Activated CD4-positive, alpha-beta T cell treated with anti-CD3 and anti-CD28 coated beads for 36 hours (primary cell): ENCODE measurements at regions of chr17 and their contacts with region 1.

Region 1: DNA sequence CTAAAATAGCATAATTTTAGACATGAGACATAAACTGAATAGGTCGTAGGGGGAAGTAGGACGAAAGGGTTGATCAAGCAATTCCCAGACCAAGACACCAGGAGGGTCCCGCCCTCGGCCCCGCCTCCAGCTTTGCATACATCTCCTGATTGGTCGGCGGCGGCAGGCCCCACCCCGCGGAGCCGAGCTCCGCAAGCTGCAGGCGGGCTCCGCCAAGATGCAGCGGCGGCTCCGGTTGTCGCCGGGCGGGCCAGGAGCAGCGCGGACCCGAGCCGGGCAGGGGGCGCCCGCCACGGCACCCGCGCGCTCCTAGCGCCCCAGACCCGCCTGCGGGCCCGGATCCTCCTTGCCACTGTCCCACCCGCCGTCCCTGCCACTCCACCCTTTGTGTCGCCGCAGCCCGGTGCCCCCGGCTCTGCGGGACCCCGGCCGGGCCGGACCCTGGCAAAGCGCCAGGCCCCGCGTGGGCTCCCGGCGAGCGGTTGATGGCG is at the start of gene CDR2L:
- DNase-seq: peak; percentile 95
- ATAC-seq: peak; percentile 98
- H3K4me3 Mint-ChIP-seq: peak within 1 kb of the TSS; percentile 73
- H3K27ac Mint-ChIP-seq: no peak within 1 kb of the TSS
- H3K4me1 Mint-ChIP-seq: peaks cover 9% of the 10 kb centered on the region
- H3K27me3 Mint-ChIP-seq: peaks cover 10% of the 10 kb centered on the region
- total RNA-seq, gene CDR2L: 0.89 to 0.91 TPM

Region 2: DNA sequence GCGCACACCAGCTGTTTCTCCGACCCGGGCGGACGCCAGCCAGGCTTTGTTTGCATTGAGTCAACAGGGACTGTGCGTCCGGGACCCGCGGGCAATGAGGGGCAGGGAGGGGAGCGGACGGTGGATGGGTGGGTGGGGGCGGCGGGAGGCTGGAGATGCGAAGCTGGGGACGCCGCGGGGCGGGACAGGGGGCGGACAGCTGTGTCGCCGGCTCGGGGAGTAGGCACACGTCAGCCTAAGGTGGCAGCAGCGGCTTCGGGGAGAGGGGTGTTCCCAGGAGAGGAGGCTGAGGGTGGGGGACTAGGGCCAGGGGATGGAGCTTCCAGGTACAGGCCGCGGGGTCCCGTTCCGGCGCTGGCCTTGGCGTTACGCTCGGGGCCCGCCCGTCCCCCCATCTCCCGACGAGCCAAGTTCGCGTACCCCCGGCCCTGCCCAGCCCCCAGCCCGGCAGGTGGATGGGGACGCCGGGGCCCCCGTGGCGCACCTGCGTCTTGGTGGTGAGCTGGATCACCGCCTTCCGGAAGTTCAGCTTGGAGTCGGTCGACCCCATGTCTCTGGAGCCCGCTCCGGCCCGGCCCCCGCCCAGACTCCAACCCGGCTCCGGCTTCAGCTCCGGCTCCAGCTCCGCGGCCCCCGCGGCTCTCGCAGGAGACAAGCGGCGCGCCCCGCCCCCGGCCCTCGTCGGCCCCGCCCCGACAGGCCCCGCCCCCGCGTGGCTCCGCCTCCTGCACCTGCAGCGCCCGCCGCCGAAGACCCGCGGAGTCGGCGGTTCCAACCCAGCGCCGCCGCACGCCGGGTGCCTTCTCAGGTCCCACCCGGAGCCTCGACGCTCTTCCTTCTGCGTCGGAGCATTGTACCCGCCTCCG is 15.1 kb before region 1 on chr17 and contains the start of gene HID1:
- CTCF ChIA-PET with region 1: interaction called, 19 read pairs
- POLR2A ChIA-PET with region 1: no interaction called
- intact Hi-C with region 1: loop called in 1 of 2 experiments (anchors 1 kb)
- DNase-seq: peak; percentile 88
- ATAC-seq: peak; percentile 89
- H3K4me3 Mint-ChIP-seq: peak within 1 kb of the TSS; percentile 70
- H3K27ac Mint-ChIP-seq: no peak within 1 kb of the TSS
- H3K4me1 Mint-ChIP-seq: peaks cover 9% of the 10 kb centered on the region
- H3K27me3 Mint-ChIP-seq: peaks cover 7% of the 10 kb centered on the region
- total RNA-seq, gene HID1: 1.6 TPM

Region 3: GRCh38 chr17:75046582-75047289 is 59.3 kb after region 1 on chr17 and contains the starts of genes ATP5PD and KCTD2:
- CTCF ChIA-PET with region 1: no interaction called
- POLR2A ChIA-PET with region 1: no interaction called
- intact Hi-C with region 1: loop called (anchors 1 to 2 kb)
- DNase-seq: peak; percentile 97
- ATAC-seq: peak; percentile 95
- H3K4me3 Mint-ChIP-seq: peak within 1 kb of the TSS; percentile 99
- H3K27ac Mint-ChIP-seq: peak within 1 kb of the TSS; percentile 94
- H3K4me1 Mint-ChIP-seq: peaks cover 37% of the 10 kb centered on the region
- H3K27me3 Mint-ChIP-seq: no peaks in the 10 kb centered on the region
- total RNA-seq, gene ATP5PD: 194 to 237 TPM
- total RNA-seq, gene KCTD2: 15.3 to 16.7 TPM

Region 4: GRCh38 chr17:75219815-75220214 is 232.4 kb after region 1 on chr17:
- CTCF ChIA-PET with region 1: no interaction called
- POLR2A ChIA-PET with region 1: no interaction called
- intact Hi-C with region 1: no loop called
- DNase-seq: no peak
- ATAC-seq: no peak
- H3K4me3 Mint-ChIP-seq: no peak overlapping the region
- H3K27ac Mint-ChIP-seq: no peak overlapping the region
- H3K4me1 Mint-ChIP-seq: no peaks in the 10 kb centered on the region
- H3K27me3 Mint-ChIP-seq: no peaks in the 10 kb centered on the region

Region 5: DNA sequence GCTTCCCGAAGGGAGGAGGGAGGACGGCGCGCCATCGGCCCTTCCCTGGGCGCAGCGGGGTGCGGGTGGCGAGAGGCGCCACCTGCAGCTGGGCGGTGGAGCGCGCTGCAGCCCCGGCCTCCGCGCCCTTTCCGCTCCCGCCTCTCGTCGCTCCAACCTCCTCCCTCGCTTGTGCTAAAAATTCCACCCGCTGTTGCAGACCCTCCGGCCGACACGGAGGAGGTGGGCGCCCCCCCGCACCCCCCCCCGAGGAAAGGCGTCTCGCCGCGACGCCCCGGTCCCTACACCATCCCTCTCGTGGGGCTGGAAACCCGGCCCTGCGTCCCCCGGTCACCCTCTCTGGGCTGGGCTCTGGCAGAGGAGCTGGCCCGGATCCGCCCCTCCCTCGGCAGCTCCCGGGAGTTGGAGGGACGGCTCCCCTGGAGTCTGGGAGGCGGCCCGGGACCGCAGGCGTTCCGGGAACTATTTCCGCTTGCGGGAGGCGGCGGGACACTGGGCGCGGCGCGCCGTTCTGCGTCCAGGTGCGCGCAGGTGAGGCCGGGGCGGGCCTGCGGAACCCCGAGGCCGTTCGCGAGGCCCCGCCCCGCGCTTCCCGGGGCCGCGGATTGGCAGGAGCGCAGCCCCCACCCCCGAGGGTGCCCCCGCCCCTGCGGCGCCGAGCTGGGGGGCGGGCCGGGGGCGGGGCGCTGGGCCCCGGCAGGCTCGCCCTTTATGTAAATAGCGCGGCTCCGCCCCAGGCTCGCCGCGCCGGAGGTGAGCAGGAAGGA is 537.7 kb after region 1 on chr17 and contains the start of gene LLGL2:
- CTCF ChIA-PET with region 1: no interaction called
- POLR2A ChIA-PET with region 1: no interaction called
- intact Hi-C with region 1: loop called in 1 of 2 experiments (anchors 1 kb)
- DNase-seq: peak; percentile 88
- ATAC-seq: peak; percentile 89
- H3K4me3 Mint-ChIP-seq: peak within 1 kb of the TSS; percentile 62
- H3K27ac Mint-ChIP-seq: no peak within 1 kb of the TSS
- H3K4me1 Mint-ChIP-seq: peaks cover 10% of the 10 kb centered on the region
- H3K27me3 Mint-ChIP-seq: no peaks in the 10 kb centered on the region
- total RNA-seq, gene LLGL2: 7.1 to 9.6 TPM